Natural killer cell (primary cell): ENCODE measurements at regions of chr14 and their contacts with region 1.

Region 1: GRCh38 chr14:44912041-44912869 is 49.5 kb downstream of the KLHL28 start:
- DNase-seq: no peak
- ATAC-seq: peak in 2 of 3 donors; percentile 46 to 58
- H3K4me3 ChIP-seq: no peak overlapping the region
- H3K4me3 Mint-ChIP-seq: peak overlapping the region; percentile 49
- H3K27ac ChIP-seq: no peak overlapping the region
- H3K27ac Mint-ChIP-seq: no peak overlapping the region
- H3K4me1 ChIP-seq: peaks cover 3% of the 10 kb centered on the region
- H3K4me1 Mint-ChIP-seq: no peaks in the 10 kb centered on the region
- H3K27me3 ChIP-seq: peaks cover 24% of the 10 kb centered on the region
- H3K27me3 Mint-ChIP-seq: peaks cover 26 to 32% of the 10 kb centered on the region in 2 donors
- CTCF ChIP-seq: no peak

Region 2: GRCh38 chr14:44204061-44204835 is 708.0 kb before region 1 on chr14:
- intact Hi-C with region 1: no loop called
- DNase-seq: no peak
- ATAC-seq: no peak
- H3K4me3 ChIP-seq: no peak overlapping the region
- H3K4me3 Mint-ChIP-seq: no peak overlapping the region
- H3K27ac ChIP-seq: no peak overlapping the region
- H3K27ac Mint-ChIP-seq: no peak overlapping the region
- H3K4me1 ChIP-seq: no peaks in the 10 kb centered on the region
- H3K4me1 Mint-ChIP-seq: no peaks in the 10 kb centered on the region
- H3K27me3 ChIP-seq: no peaks in the 10 kb centered on the region
- H3K27me3 Mint-ChIP-seq: no peaks in the 10 kb centered on the region
- CTCF ChIP-seq: no peak

Region 3: DNA sequence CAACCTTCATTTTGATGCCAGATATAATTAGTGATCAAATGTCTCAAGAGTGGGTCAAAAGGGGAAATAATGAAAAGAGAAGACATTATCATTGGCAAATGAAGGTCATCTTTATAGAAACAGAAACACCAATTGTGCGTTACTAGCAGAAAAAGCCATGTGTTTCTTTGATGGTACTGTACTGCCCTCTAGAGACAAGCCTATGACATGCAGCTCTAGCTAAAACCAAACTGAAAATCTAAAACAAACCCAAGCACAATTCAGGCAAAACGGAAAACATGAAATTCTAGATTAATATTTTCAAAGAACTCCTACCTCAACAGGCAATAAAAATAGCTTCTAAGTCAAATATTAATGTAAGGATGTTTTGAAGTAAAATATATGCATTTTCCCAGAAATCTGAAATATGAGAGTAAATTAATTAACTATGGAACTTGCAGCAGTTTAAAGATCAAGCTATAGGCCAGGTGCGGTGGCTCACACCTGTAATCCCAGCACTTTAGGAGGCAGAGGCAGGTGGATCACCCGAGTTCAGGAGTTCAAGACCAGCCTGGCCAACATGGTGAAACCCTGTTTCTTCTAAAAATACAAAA is 65.9 kb before region 1 on chr14:
- intact Hi-C with region 1: no loop called
- DNase-seq: peak in 1 of 2 donors; percentile 63
- ATAC-seq: peak in 2 of 3 donors; percentile 65 to 67
- H3K4me3 ChIP-seq: no peak overlapping the region
- H3K4me3 Mint-ChIP-seq: no peak overlapping the region
- H3K27ac ChIP-seq: no peak overlapping the region
- H3K27ac Mint-ChIP-seq: no peak overlapping the region
- H3K4me1 ChIP-seq: no peaks in the 10 kb centered on the region
- H3K4me1 Mint-ChIP-seq: peaks cover 0 to 5% of the 10 kb centered on the region in 2 donors
- H3K27me3 ChIP-seq: no peaks in the 10 kb centered on the region
- H3K27me3 Mint-ChIP-seq: peaks cover 4 to 12% of the 10 kb centered on the region in 2 donors
- CTCF ChIP-seq: peak; percentile 71

Region 4: DNA sequence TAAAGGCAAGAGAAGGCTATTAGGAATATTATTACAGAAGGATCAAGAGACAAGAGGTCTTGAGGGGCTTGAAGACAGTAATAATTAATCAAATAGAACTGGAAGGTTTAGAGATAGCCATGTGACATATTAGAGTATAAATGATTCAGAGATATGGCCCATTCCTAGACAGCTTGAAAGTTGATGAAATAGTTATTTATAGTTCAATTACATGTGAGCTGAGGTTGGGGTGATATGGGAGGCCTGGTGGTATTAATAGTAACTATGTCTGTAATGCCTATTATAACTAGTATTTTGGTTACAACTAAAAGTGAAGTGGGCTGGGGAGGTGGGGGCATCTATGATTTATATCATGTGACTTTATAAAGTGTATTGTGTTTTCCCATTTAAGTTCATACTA is 354.8 kb after region 1 on chr14:
- intact Hi-C with region 1: loop called (anchors 1 kb)
- DNase-seq: no peak
- ATAC-seq: no peak
- H3K4me3 ChIP-seq: no peak overlapping the region
- H3K4me3 Mint-ChIP-seq: no peak overlapping the region
- H3K27ac ChIP-seq: no peak overlapping the region
- H3K27ac Mint-ChIP-seq: no peak overlapping the region
- H3K4me1 ChIP-seq: no peaks in the 10 kb centered on the region
- H3K4me1 Mint-ChIP-seq: no peaks in the 10 kb centered on the region
- H3K27me3 ChIP-seq: peaks cover 2% of the 10 kb centered on the region
- H3K27me3 Mint-ChIP-seq: peaks cover 8% of the 10 kb centered on the region in 2 donors
- CTCF ChIP-seq: no peak